ENCODE measurements at regions of chr11 and their contacts with region 1.

Region 1: DNA sequence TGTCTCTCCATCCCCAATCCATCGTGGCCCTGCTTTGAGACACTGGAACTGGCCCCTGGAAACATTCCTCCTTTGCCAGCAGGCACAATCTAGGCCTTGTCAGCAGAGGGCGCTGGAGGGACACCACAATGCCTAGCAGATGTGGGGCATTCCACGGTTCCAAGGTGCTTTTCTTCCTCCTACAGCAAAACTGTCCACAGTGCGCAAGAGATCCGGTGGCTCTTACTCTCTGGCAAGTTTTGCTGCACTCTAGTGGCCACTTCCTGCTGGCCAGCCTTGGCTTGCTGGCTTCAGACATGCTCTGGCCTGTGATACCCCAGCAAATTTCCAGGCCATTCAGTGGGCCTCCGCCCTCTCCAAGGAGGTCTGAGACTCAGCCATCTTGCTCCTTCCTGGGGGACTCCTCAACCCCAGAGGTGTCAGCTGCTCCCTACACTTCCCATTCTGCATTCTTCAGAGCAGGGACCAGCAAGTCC is 17.1 kb upstream of the RBM4B start:
- DNase-seq: peak; percentile 95
- H3K4me3 ChIP-seq: no peak overlapping the region
- H3K27ac ChIP-seq: no peak overlapping the region
- H3K4me1 ChIP-seq: peaks cover 0 to 10% (median 4%) of the 10 kb centered on the region in 4 donors
- H3K27me3 ChIP-seq: no peaks in the 10 kb centered on the region
- CTCF ChIP-seq: peak; percentile 89 to 97 (median 95)
- EP300 ChIP-seq: no peak
- POLR2A ChIP-seq: no peak

Region 2: GRCh38 chr11:66659763-66660162 is 35.0 kb before region 1 on chr11:
- intact Hi-C with region 1: no loop called
- DNase-seq: no peak
- H3K4me3 ChIP-seq: no peak overlapping the region
- H3K27ac ChIP-seq: no peak overlapping the region
- H3K4me1 ChIP-seq: no peaks in the 10 kb centered on the region
- H3K27me3 ChIP-seq: no peaks in the 10 kb centered on the region
- CTCF ChIP-seq: no peak
- EP300 ChIP-seq: no peak
- POLR2A ChIP-seq: no peak

Region 3: DNA sequence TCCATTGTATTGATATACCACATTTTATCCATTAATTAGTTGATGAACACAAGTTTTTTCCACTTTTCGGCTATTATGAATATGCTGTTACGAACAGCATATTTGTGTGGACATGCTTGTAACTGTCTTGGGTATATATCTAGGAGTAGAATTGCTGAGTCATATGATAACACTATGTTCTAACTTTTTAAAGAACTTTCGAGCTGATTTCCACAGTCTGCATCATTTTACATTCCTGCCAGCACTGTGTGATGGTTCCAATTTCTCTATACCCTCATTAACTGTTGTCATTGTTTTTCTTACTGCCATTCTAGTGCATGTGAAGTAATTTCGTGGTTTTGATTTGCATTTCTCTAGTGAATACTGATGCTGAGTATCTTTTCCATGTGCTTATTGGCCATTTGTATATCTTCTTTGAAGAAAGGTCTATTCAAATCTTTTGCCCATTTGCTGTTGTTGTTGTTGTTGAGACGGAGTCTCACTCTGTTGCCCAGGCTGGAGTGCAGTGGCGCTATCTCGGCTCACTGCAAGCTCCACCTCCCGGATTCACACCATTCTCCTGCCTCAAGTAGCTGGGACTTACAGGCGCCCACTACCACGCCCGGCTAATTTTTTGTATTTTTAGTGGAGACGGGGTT is 141.1 kb after region 1 on chr11:
- intact Hi-C with region 1: loop called (anchors 1 kb)
- DNase-seq: no peak
- H3K4me3 ChIP-seq: no peak overlapping the region
- H3K27ac ChIP-seq: no peak overlapping the region
- H3K4me1 ChIP-seq: peaks cover 0 to 10% (median 6%) of the 10 kb centered on the region in 4 donors
- H3K27me3 ChIP-seq: no peaks in the 10 kb centered on the region
- CTCF ChIP-seq: no peak
- EP300 ChIP-seq: no peak
- POLR2A ChIP-seq: no peak

Region 4: GRCh38 chr11:66883016-66883968 is 188.5 kb after region 1 on chr11:
- intact Hi-C with region 1: loop called (anchors 2 kb)
- DNase-seq: no peak
- H3K4me3 ChIP-seq: peak overlapping the region; percentile 33 to 48 (median 42)
- H3K27ac ChIP-seq: peak overlapping the region; percentile 33 to 69 (median 60)
- H3K4me1 ChIP-seq: peaks cover 0 to 40% (median 30%) of the 10 kb centered on the region in 4 donors
- H3K27me3 ChIP-seq: no peaks in the 10 kb centered on the region
- CTCF ChIP-seq: peak; percentile 55 to 73 (median 64)
- EP300 ChIP-seq: no peak
- POLR2A ChIP-seq: no peak